Panc1 (cell line): ENCODE measurements at regions of chr3 and their contacts with region 1.

Region 1: DNA sequence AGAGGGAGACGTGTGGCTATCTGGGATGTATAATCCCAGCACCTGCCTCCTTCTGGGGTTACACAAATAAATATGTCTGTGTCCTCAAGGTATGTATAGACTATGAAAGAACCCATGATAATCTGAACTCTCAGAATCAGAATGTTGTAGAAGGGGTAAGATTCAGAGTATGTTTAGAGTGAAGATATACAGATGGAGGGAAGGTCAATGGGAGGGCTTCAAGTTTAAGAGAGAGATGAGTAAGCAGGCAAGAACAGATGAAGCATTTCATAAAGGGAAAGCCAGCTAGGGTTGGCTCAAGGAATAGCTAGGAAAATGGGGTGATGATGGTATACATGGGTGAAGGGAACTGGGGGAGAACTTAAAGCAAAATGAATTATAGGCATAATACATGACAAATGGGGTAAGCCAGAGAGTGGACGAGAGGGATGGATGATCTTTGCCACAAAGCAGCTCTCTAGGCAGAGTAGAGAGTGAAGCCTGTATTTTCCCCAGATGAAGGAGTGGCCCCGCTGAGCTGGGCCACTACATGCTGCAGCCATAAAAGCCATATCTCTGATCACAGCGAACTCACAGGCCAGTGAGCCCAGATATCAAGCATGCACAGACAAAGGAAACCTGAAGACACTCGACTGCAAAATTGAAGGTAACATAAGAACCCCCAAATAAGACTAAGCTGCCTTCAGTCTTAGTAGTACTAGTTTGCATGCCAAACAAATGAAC is 15.9 kb upstream of the ZBTB38 start:
- DNase-seq: no peak
- ATAC-seq: no peak
- H3K4me3 ChIP-seq: no peak overlapping the region
- H3K27ac ChIP-seq: no peak overlapping the region
- H3K4me1 ChIP-seq: no peaks in the 10 kb centered on the region
- H3K27me3 ChIP-seq: no peaks in the 10 kb centered on the region
- CTCF ChIP-seq: no peak

Region 2: DNA sequence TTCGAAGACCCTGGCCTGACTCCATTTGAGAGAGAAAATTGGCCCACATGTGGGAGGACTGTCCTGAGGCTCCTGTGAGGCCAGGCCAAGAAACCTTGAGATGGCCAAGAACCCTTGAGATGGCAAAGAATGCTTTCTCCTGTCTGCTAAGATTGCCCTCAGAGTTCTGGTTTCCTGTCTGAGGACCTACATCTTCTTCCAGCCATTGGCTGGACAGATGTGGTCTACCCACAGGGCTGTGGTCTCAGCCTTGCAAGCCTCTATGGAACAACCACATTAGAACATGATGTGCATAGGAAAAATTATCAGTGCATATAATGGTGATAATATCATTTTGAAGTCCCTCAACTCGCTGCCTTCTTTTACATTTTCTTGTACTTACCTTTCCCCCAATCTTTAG is 123.6 kb after region 1 on chr3:
- CTCF ChIA-PET with region 1: interaction called, 12 read pairs
- POLR2A ChIA-PET with region 1: no interaction called
- in situ Hi-C with region 1: no loop called
- intact Hi-C with region 1: no loop called
- DNase-seq: no peak
- ATAC-seq: no peak
- H3K4me3 ChIP-seq: no peak overlapping the region
- H3K27ac ChIP-seq: no peak overlapping the region
- H3K4me1 ChIP-seq: no peaks in the 10 kb centered on the region
- H3K27me3 ChIP-seq: no peaks in the 10 kb centered on the region
- CTCF ChIP-seq: no peak